ENCODE measurements at regions of chr15 and their contacts with region 1.

Region 1: GRCh38 chr15:101014921-101015841 is 96.0 kb downstream of the LRRK1 start:
- DNase-seq: peak in 1 of 2 experiments; percentile 65
- H3K4me3 ChIP-seq: no peak overlapping the region
- H3K27ac ChIP-seq: no peak overlapping the region
- H3K4me1 ChIP-seq: no peaks in the 10 kb centered on the region
- H3K27me3 ChIP-seq: no peaks in the 10 kb centered on the region
- CTCF ChIP-seq: peak; percentile 93

Region 2: GRCh38 chr15:100856867-100857266 is 158.3 kb before region 1 on chr15:
- CTCF ChIA-PET with region 1: interaction called, 20 read pairs
- POLR2A ChIA-PET with region 1: no interaction called
- intact Hi-C with region 1: no loop called
- DNase-seq: no peak
- H3K4me3 ChIP-seq: no peak overlapping the region
- H3K27ac ChIP-seq: 0 out of 2 replicates have a peak overlapping the region, but pooled peaks have one; percentile 30
- H3K4me1 ChIP-seq: peaks cover 25% of the 10 kb centered on the region
- H3K27me3 ChIP-seq: no peaks in the 10 kb centered on the region
- CTCF ChIP-seq: no peak

Region 3: GRCh38 chr15:101088788-101089583 is 73.8 kb after region 1 on chr15:
- CTCF ChIA-PET with region 1: no interaction called
- POLR2A ChIA-PET with region 1: no interaction called
- intact Hi-C with region 1: loop called (anchors 2 kb)
- DNase-seq: peak in 1 of 2 experiments; percentile 78
- H3K4me3 ChIP-seq: no peak overlapping the region; the same call in 1 of the 2 replicates
- H3K27ac ChIP-seq: no peak overlapping the region
- H3K4me1 ChIP-seq: no peaks in the 10 kb centered on the region
- H3K27me3 ChIP-seq: no peaks in the 10 kb centered on the region
- CTCF ChIP-seq: peak; percentile 96

Region 4: GRCh38 chr15:101258238-101259144 is 243.3 kb after region 1 on chr15:
- CTCF ChIA-PET with region 1: interaction called, 5 read pairs
- POLR2A ChIA-PET with region 1: no interaction called
- intact Hi-C with region 1: loop called (anchors 1 kb)
- DNase-seq: peak in 1 of 2 experiments; percentile 48
- H3K4me3 ChIP-seq: no peak overlapping the region
- H3K27ac ChIP-seq: no peak overlapping the region
- H3K4me1 ChIP-seq: no peaks in the 10 kb centered on the region
- H3K27me3 ChIP-seq: peaks cover 11% of the 10 kb centered on the region
- CTCF ChIP-seq: peak; percentile 88

Measured in PC-9 (cell line).